WTC11 (cell line): ENCODE measurements at regions of chr1 and their contacts with region 1.

Region 1: DNA sequence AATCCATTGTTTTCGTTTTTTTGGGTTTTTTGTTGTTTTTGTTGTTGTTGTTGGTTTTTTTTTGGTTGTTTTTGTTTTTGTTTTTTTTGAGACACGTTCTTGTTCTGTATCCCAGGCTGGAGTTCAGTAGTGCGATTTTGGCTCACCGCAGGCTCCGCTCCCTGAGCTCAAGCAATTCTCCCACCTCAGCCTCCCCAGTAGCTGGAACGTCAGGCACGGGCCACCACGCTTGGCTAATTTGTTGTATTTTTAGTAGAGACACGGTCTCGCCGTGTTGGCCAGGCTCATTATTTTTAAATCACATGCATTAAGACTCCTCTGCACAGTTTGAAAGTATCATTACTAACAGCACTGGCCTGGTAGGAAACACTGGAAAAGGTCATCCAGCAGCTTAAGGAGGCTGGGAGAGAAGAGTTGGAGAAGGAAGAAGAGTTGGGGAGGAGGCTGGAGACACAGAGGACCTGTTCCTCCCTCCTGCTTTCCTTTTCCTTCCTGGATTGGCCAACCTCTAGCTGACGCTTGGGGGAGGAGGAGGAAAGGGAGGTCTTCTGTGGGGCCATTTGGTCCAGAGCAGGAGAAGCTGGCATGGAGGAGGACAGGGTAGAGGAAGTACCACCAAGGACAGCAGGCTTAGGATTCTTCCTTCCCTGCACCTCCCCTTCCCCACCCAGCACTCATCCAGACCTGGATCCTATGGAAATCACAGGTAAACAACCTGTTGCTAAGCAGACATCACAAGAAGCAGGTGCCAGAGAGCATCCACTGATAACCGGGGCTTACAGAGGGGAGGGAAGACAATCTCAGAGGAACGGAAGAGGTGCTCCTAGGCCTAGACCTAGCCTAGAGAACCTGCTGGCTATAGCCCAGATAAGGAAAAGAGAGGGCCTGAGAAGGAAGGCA is 71.9 kb upstream of the GOLT1A start:
- DNase-seq: no peak
- ATAC-seq: no peak
- H3K4me3 Mint-ChIP-seq: no peak overlapping the region
- H3K27ac Mint-ChIP-seq: no peak overlapping the region
- H3K4me1 Mint-ChIP-seq: peaks cover 34% of the 10 kb centered on the region
- H3K27me3 Mint-ChIP-seq: no peaks in the 10 kb centered on the region
- CTCF ChIP-seq: no peak

Region 2: GRCh38 chr1:204263254-204263910 is 22.3 kb before region 1 on chr1:
- CTCF ChIA-PET with region 1: interaction called, 35 read pairs
- POLR2A ChIA-PET with region 1: no interaction called
- DNase-seq: no peak
- ATAC-seq: no peak
- H3K4me3 Mint-ChIP-seq: no peak overlapping the region
- H3K27ac Mint-ChIP-seq: no peak overlapping the region
- H3K4me1 Mint-ChIP-seq: no peaks in the 10 kb centered on the region
- H3K27me3 Mint-ChIP-seq: no peaks in the 10 kb centered on the region
- CTCF ChIP-seq: no peak

Region 3: GRCh38 chr1:204273471-204273870 is 12.2 kb before region 1 on chr1:
- CTCF ChIA-PET with region 1: no interaction called
- POLR2A ChIA-PET with region 1: no interaction called
- DNase-seq: no peak
- ATAC-seq: no peak
- H3K4me3 Mint-ChIP-seq: no peak overlapping the region
- H3K27ac Mint-ChIP-seq: no peak overlapping the region
- H3K4me1 Mint-ChIP-seq: peaks cover 2% of the 10 kb centered on the region; the same call in 1 of the 2 replicates
- H3K27me3 Mint-ChIP-seq: no peaks in the 10 kb centered on the region
- CTCF ChIP-seq: no peak